Psoas muscle (tissue), 8 donors: ENCODE measurements at regions of chr15 and their contacts with region 1.

Region 1: GRCh38 chr15:78108299-78109084 is 16.1 kb downstream of the SH2D7 start:
- DNase-seq: peak; percentile 86 to 92
- ATAC-seq: peak; percentile 91 to 96 (median 92)
- H3K4me3 ChIP-seq: no peak overlapping the region
- H3K27ac ChIP-seq: no peak overlapping the region
- H3K4me1 ChIP-seq: no peaks in the 10 kb centered on the region
- H3K27me3 ChIP-seq: no peaks in the 10 kb centered on the region
- CTCF ChIP-seq: peak; percentile 93

Region 2: GRCh38 chr15:77959432-77959879 is 149.0 kb before region 1 on chr15:
- intact Hi-C with region 1: loop called in 1 of 2 experiments (anchors 1 kb)
- DNase-seq: peak; percentile 77 to 89
- ATAC-seq: peak; percentile 99
- H3K4me3 ChIP-seq: peak overlapping the region; percentile 44
- H3K27ac ChIP-seq: no peak overlapping the region
- H3K4me1 ChIP-seq: no peaks in the 10 kb centered on the region
- H3K27me3 ChIP-seq: no peaks in the 10 kb centered on the region
- CTCF ChIP-seq: peak; percentile 94

Region 3: GRCh38 chr15:77966540-77967290 is 141.8 kb before region 1 on chr15:
- intact Hi-C with region 1: loop called (anchors 2 kb)
- DNase-seq: peak in 1 of 2 donors; percentile 73
- ATAC-seq: peak; percentile 75 to 94 (median 84)
- H3K4me3 ChIP-seq: no peak overlapping the region
- H3K27ac ChIP-seq: no peak overlapping the region
- H3K4me1 ChIP-seq: no peaks in the 10 kb centered on the region
- H3K27me3 ChIP-seq: no peaks in the 10 kb centered on the region
- CTCF ChIP-seq: peak; percentile 87

Region 4: DNA sequence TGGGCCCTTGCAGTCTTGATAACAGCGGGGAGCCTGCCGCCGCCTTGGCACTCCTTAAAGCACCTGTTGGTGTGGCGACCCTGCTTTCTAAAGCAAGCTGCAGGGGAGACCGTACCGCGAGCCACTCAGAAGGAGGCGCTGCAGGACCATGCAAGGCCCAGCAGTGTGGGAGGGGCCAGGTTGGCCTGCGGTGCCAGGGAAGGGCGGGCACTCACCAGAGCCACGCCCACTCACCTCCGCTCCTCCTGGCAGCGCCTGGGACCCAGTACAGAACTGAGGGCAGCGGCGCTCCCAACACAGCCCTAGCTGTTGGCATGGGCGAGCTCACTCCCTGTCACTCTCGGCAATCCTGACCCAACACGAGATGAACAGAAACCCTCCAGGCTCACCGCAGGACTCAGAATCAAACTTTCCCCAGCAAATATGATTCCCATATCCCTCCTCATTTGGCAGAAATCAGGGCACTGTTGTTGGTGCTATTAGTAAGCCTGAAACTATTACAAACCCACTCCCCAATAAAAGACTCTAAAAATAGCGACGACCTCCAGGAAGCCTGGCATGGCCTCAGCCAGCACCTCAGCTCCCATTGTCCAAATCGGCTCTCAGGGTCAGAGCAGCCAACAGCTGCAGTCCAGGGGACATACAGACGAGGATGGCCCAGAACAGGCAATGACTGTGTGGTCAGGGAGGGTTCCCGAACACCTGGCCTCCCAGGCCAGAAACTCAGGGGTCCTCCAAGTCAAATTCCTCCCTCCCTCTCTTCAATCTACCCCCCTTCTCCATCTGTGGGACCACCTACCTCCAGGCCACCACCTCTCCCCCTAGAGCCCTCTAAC is 108.2 kb before region 1 on chr15:
- intact Hi-C with region 1: loop called (anchors 1 to 2 kb)
- DNase-seq: peak; percentile 74 to 90
- ATAC-seq: peak; percentile 60 to 71 (median 66)
- H3K4me3 ChIP-seq: no peak overlapping the region
- H3K27ac ChIP-seq: no peak overlapping the region
- H3K4me1 ChIP-seq: peaks cover 24% of the 10 kb centered on the region
- H3K27me3 ChIP-seq: no peaks in the 10 kb centered on the region
- CTCF ChIP-seq: peak; percentile 66

Region 5: DNA sequence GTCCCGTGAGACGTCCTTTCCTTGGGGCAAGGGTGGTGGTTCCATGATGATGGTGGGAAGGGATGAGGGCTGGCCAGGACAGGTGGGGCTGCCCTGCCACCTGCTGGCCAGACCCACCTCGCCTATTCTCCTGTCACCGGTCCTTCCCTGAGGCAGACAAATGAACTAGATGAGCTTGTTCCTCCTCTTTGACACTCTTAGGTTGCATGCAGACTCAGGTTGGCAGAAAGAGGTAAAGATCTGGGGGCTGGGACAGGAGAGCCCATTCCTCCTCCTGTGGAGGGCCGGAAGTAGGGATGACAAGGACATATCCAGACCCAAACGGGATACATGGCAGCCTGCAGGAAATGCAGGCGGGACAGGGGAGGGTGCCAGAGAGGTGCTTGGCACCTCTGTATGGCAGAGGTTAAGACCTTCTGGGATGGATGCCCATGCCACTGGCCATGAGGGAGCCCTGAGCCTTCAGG is 87.3 kb after region 1 on chr15:
- intact Hi-C with region 1: loop called (anchors 1 to 5 kb)
- DNase-seq: peak in 1 of 2 donors; percentile 56
- ATAC-seq: peak; percentile 84 to 93 (median 88)
- H3K4me3 ChIP-seq: no peak overlapping the region
- H3K27ac ChIP-seq: no peak overlapping the region
- H3K4me1 ChIP-seq: no peaks in the 10 kb centered on the region
- H3K27me3 ChIP-seq: no peaks in the 10 kb centered on the region
- CTCF ChIP-seq: peak; percentile 73

Region 6: GRCh38 chr15:78241007-78241406 is 132.5 kb after region 1 on chr15:
- intact Hi-C with region 1: loop called (anchors 1 to 5 kb)
- DNase-seq: peak; percentile 86 to 95
- ATAC-seq: peak; percentile 94 to 98 (median 96)
- H3K4me3 ChIP-seq: no peak overlapping the region
- H3K27ac ChIP-seq: no peak overlapping the region
- H3K4me1 ChIP-seq: peaks cover 5% of the 10 kb centered on the region
- H3K27me3 ChIP-seq: no peaks in the 10 kb centered on the region
- CTCF ChIP-seq: peak; percentile 91

Region 7: GRCh38 chr15:78315686-78316282 is 207.3 kb after region 1 on chr15:
- intact Hi-C with region 1: no loop called
- DNase-seq: peak in 1 of 2 donors; percentile 13
- ATAC-seq: no peak
- H3K4me3 ChIP-seq: no peak overlapping the region
- H3K27ac ChIP-seq: no peak overlapping the region
- H3K4me1 ChIP-seq: no peaks in the 10 kb centered on the region
- H3K27me3 ChIP-seq: no peaks in the 10 kb centered on the region
- CTCF ChIP-seq: no peak

Region 8: DNA sequence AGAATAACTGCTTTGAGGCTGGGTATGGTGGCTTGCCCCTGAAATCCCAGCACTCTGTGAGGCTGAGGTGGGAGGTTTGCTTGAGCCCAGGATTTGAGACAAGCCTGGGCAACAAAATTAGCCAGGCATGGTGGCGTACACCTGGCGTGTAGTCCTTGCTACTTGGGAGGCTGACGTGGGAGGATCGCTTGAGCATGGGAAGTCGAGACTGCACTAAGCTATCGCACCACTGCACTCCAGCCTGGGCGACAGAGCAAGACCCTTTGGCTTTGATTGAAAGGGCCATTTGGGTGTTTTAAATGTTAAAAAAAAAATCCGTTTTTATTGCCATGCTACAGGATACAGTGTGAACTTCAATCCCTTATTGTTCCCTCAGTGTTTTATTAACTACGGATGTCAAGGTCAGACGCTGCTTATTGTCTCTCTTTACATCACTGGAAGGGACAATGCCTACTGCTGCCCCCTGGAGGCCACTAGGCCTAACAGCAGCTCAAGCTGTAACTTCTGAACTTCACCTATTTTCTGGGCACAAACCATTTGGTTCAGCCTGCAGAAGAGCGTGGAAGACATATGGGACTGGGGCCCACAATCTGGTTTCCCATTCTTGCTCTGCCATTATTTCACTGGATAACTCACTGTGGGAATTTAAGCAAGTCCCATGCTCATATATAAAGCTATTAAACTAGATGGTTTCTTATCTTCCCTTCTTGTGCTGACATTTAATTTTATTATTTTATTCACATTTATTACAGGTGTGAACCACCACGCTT is 314.3 kb after region 1 on chr15:
- intact Hi-C with region 1: loop called in 1 of 2 experiments (anchors 5 kb)
- DNase-seq: peak; percentile 51 to 77
- ATAC-seq: peak; percentile 74 to 88 (median 82)
- H3K4me3 ChIP-seq: no peak overlapping the region
- H3K27ac ChIP-seq: no peak overlapping the region
- H3K4me1 ChIP-seq: no peaks in the 10 kb centered on the region
- H3K27me3 ChIP-seq: no peaks in the 10 kb centered on the region
- CTCF ChIP-seq: peak; percentile 89